ENCODE measurements at regions of chr19 and their contacts with region 1.

Region 1: GRCh38 chr19:29735800-29736199 is 20.7 kb upstream of the C19orf12 start:
- DNase-seq: no peak
- H3K4me3 ChIP-seq: no peak overlapping the region
- H3K27ac ChIP-seq: no peak overlapping the region
- H3K4me1 ChIP-seq: no peaks in the 10 kb centered on the region
- H3K27me3 ChIP-seq: peaks cover 2% of the 10 kb centered on the region
- CTCF ChIP-seq: no peak

Region 2: DNA sequence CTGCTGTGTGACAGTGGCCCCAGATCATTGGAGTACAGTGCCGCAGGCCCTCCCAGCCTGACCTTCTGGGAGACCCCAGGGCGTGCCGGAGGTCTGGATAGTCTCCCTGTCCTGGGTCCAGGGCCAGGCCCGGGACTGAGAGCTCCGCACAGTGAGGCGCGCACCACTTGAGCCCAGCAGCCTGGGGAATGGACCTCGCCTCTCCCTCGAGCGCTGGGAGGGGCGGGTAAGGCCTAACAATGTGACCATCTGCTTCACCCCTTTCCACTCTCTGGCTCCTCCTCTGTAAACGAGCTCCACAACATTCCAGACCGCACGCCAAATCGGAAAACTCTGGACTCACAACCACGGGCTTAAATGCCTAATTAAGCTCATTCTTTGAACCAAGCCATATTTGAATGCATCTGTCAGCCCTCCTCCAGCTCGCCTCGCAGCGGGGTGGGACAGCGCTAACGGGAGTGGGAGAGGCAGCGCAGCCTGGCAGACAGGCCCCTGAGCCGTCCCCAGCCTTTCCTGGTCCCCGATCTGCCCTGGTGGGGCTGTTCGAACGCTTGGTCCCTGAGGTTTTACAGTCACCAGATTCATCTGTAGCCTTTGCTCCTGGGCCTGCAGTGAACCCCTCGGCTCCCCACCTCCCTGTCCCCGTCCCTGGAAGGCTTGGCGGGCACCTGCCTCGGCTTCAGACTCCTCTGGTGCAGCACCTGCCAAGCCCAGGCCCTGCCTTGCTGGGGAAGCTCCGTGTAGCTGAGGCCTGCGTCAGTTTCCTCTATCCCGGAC is 330.7 kb before region 1 on chr19:
- CTCF ChIA-PET with region 1: no interaction called
- dilution Hi-C with region 1: loop called (anchors 10 kb)
- in situ Hi-C with region 1: no loop called
- intact Hi-C with region 1: no loop called
- DNase-seq: no peak
- H3K4me3 ChIP-seq: no peak overlapping the region
- H3K27ac ChIP-seq: no peak overlapping the region
- H3K4me1 ChIP-seq: no peaks in the 10 kb centered on the region
- H3K27me3 ChIP-seq: no peaks in the 10 kb centered on the region
- CTCF ChIP-seq: no peak

Region 3: GRCh38 chr19:29761575-29762232 is 25.9 kb after region 1 on chr19:
- CTCF ChIA-PET with region 1: no interaction called
- dilution Hi-C with region 1: no loop called
- in situ Hi-C with region 1: no loop called
- intact Hi-C with region 1: loop called (anchors 2 kb)
- DNase-seq: no peak
- H3K4me3 ChIP-seq: no peak overlapping the region
- H3K27ac ChIP-seq: no peak overlapping the region
- H3K4me1 ChIP-seq: no peaks in the 10 kb centered on the region
- H3K27me3 ChIP-seq: no peaks in the 10 kb centered on the region
- CTCF ChIP-seq: no peak

Region 4: GRCh38 chr19:29873024-29873800 is 137.4 kb after region 1 on chr19:
- CTCF ChIA-PET with region 1: interaction called, 3 read pairs
- dilution Hi-C with region 1: no loop called
- in situ Hi-C with region 1: no loop called
- intact Hi-C with region 1: loop called (anchors 1 kb)
- DNase-seq: no peak
- H3K4me3 ChIP-seq: peak overlapping the region; percentile 28 to 46 (median 33)
- H3K27ac ChIP-seq: no peak overlapping the region
- H3K4me1 ChIP-seq: peaks cover 11% of the 10 kb centered on the region
- H3K27me3 ChIP-seq: no peaks in the 10 kb centered on the region
- CTCF ChIP-seq: peak; percentile 33 to 66

Region 5: GRCh38 chr19:29927944-29928625 is 192.3 kb after region 1 on chr19:
- CTCF ChIA-PET with region 1: no interaction called
- dilution Hi-C with region 1: loop called (anchors 10 kb)
- in situ Hi-C with region 1: no loop called
- intact Hi-C with region 1: no loop called
- DNase-seq: no peak
- H3K4me3 ChIP-seq: no peak overlapping the region
- H3K27ac ChIP-seq: no peak overlapping the region
- H3K4me1 ChIP-seq: no peaks in the 10 kb centered on the region
- H3K27me3 ChIP-seq: no peaks in the 10 kb centered on the region
- CTCF ChIP-seq: no peak

Region 6: GRCh38 chr19:29966588-29967249 is 230.9 kb after region 1 on chr19:
- CTCF ChIA-PET with region 1: no interaction called
- dilution Hi-C with region 1: no loop called
- in situ Hi-C with region 1: no loop called
- intact Hi-C with region 1: loop called (anchors 5 kb)
- DNase-seq: no peak
- H3K4me3 ChIP-seq: no peak overlapping the region
- H3K27ac ChIP-seq: no peak overlapping the region
- H3K4me1 ChIP-seq: peaks cover 5% of the 10 kb centered on the region
- H3K27me3 ChIP-seq: no peaks in the 10 kb centered on the region
- CTCF ChIP-seq: peak in 1 of 2 donors; percentile 41

Region 7: GRCh38 chr19:30001791-30002190 is 266.0 kb after region 1 on chr19:
- CTCF ChIA-PET with region 1: no interaction called
- dilution Hi-C with region 1: loop called (anchors 10 kb)
- in situ Hi-C with region 1: no loop called
- intact Hi-C with region 1: no loop called
- DNase-seq: no peak
- H3K4me3 ChIP-seq: no peak overlapping the region
- H3K27ac ChIP-seq: no peak overlapping the region
- H3K4me1 ChIP-seq: no peaks in the 10 kb centered on the region
- H3K27me3 ChIP-seq: no peaks in the 10 kb centered on the region
- CTCF ChIP-seq: no peak

Measured in mammary epithelial cell (primary cell).